Dendritic cell treated with granulocyte-macrophage colony-stimulating factor and Interleukin-4, amounts not matched to agents 40 ng/mL and 50 ng/mL, for 4 days (primary cell): ENCODE measurements at regions of chr17 and their contacts with region 1.

Region 1: DNA sequence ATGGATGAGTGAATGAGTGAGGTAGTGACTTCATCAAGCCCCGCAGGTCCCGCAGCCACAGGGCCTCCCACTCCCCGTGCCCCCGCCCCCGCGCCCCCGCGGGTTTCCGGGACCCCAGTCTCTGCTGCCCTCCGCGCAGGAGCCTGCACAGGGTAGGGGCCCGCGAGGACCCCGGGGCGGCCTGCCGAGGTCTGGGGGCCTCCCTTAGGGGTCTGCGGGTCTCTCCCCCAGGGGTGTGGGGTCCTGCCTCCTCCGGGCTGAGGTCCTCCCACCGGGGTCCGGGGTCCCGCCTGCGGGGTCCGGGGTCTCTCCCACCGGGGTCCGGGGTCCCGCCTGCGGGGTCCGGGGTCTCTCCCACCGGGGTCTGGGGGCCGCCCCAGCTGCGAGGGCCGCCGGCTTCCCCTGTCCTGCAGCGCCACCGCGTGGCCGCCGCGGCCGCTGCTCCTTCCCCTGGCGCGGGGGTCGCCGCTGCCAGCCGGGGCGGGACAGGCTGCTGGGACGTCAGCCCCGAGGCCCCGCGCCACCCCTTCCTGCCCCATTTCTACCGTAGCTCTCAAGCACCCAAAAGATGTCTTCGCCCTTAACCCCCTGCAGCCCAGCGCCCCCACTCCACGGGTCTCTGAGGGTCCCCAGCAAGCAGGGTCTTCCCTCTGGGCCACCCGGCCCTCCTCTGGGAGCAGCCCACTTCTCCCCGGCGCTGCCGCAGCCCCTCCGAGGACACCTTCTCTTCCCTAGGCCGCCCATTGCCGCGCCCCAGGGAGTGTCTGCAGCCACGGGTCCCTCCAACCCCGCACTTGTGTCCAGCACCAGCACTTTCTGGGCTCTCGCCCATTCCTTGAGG is 10.4 kb upstream of the CHMP6 start:
- H3K4me3 Mint-ChIP-seq: no peak overlapping the region
- H3K27ac Mint-ChIP-seq: peak overlapping the region; percentile 18
- H3K4me1 Mint-ChIP-seq: peaks cover 26% of the 10 kb centered on the region
- H3K27me3 Mint-ChIP-seq: peaks cover 41% of the 10 kb centered on the region

Region 2: GRCh38 chr17:80426681-80427326 is 554.5 kb before region 1 on chr17:
- intact Hi-C with region 1: loop called (anchors 2 kb)
- H3K4me3 Mint-ChIP-seq: no peak overlapping the region
- H3K27ac Mint-ChIP-seq: no peak overlapping the region
- H3K4me1 Mint-ChIP-seq: peaks cover 12% of the 10 kb centered on the region
- H3K27me3 Mint-ChIP-seq: peaks cover 9% of the 10 kb centered on the region

Region 3: GRCh38 chr17:80575057-80575875 is 406.0 kb before region 1 on chr17:
- intact Hi-C with region 1: loop called (anchors 10 kb)
- H3K4me3 Mint-ChIP-seq: no peak overlapping the region
- H3K27ac Mint-ChIP-seq: no peak overlapping the region
- H3K4me1 Mint-ChIP-seq: peaks cover 20% of the 10 kb centered on the region
- H3K27me3 Mint-ChIP-seq: no peaks in the 10 kb centered on the region

Region 4: GRCh38 chr17:80866147-80866793 is 115.0 kb before region 1 on chr17:
- intact Hi-C with region 1: loop called (anchors 5 kb)
- H3K4me3 Mint-ChIP-seq: no peak overlapping the region
- H3K27ac Mint-ChIP-seq: no peak overlapping the region
- H3K4me1 Mint-ChIP-seq: peaks cover 29% of the 10 kb centered on the region
- H3K27me3 Mint-ChIP-seq: peaks cover 6% of the 10 kb centered on the region